BJ (cell line): ENCODE measurements at regions of chr1 and their contacts with region 1.

Region 1: DNA sequence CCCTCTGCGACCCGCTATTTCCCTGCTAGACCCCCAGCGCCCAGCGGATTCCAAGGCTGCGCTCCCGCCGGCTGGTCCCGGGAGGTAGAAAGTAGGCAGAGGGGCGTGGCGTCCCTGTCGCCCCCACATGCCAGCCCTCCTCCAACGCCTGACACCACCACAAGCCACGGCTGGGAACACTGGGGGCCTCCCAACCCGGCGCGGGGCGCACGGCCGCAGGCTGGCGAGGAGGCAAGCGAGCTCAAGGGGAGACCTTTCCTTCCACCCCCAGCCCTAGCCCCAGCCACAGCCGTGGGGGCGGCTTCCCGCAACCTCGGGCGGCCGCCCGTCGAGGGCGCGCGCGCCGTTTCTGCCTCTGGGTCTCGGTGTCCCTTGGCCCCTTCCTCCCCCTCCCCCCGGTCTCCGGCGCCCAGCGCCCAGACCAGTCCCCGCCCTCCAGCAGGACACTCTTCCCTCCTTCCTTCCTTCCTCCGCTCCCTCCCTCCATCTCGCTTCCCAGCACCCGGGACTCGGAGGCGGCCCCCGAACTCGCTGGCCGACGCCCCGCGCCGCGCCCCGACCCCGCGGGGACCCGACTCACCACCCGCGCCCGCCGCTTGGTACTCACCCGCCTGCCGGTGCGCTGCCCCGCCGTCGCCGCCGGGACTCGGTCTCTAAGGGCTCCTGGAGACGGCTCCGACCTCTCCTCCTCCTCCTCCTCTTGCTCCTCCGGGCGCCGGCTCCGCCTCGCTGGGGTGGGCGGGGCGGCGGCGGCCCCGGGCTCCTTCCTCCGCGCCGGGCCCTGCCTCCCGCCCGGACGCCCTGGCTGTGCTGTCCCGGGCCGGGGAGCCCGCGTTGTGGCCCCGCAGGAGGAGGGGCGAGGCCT is at the start of gene GNG12:
- DNase-seq: no peak
- H3K4me3 ChIP-seq: peak within 1 kb of the TSS; percentile 76
- H3K27me3 ChIP-seq: no peaks in the 10 kb centered on the region
- CTCF ChIP-seq: no peak
- polyA plus RNA-seq, gene GNG12: 99.6 and 190 TPM in 2 replicates

Region 2: DNA sequence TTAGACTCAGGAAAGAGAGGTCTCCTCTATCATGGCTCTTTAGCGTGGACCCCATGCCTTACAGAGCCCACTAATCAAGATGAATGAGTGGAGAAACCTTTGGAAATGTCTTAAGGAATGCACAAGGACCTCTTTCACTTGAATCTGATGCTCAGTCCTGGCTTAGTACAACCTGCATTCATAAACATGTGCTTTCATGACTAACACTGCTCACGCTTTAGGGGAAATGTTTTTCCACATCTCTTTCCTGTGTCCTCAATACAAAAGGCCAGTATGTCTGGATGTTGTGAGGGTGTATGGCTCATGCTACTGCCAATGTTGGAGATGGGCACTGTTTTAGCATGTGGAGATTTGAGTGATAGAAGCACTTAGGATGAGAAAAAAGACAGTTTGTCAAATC is 14.5 kb after region 1 on chr1:
- CTCF ChIA-PET with region 1: interaction called, 15 read pairs
- POLR2A ChIA-PET with region 1: interaction called, 12 read pairs
- DNase-seq: no peak
- H3K4me3 ChIP-seq: no peak overlapping the region
- H3K27me3 ChIP-seq: no peaks in the 10 kb centered on the region
- CTCF ChIP-seq: no peak